ENCODE measurements at regions of chr1 and their contacts with region 1.

Region 1: GRCh38 chr1:43073490-43074230 is 98.4 kb downstream of the EBNA1BP2 start:
- DNase-seq: peak; percentile 56
- ATAC-seq: peak; percentile 87
- H3K4me3 Mint-ChIP-seq: peak overlapping the region; percentile 11
- H3K27ac Mint-ChIP-seq: peak overlapping the region; percentile 6
- H3K4me1 Mint-ChIP-seq: peaks cover 29% of the 10 kb centered on the region
- H3K27me3 Mint-ChIP-seq: no peaks in the 10 kb centered on the region
- CTCF ChIP-seq: peak; percentile 30

Region 2: DNA sequence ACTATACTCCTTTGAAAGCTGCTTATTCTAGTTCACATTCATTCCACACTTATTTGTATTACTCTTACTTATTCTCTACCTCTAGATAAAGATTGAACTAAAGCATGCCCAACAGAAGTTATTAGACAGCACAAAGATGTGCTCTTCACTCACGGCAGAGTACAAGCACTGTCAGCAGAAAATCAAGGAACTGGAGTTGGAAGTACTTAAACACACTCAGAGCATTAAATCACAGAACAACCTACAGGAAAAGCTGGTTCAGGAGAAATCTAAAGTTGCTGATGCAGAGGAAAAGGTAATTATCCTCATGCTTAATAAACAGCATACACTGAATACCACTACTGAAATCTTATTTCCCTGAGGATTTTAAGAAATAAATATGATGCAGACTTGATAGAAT is 496.7 kb before region 1 on chr1:
- CTCF ChIA-PET with region 1: interaction called, 9 read pairs
- POLR2A ChIA-PET with region 1: no interaction called
- intact Hi-C with region 1: loop called (anchors 1 kb)
- DNase-seq: no peak
- ATAC-seq: no peak
- H3K4me3 Mint-ChIP-seq: no peak overlapping the region
- H3K27ac Mint-ChIP-seq: no peak overlapping the region
- H3K4me1 Mint-ChIP-seq: no peaks in the 10 kb centered on the region
- H3K27me3 Mint-ChIP-seq: no peaks in the 10 kb centered on the region
- CTCF ChIP-seq: no peak

Region 3: DNA sequence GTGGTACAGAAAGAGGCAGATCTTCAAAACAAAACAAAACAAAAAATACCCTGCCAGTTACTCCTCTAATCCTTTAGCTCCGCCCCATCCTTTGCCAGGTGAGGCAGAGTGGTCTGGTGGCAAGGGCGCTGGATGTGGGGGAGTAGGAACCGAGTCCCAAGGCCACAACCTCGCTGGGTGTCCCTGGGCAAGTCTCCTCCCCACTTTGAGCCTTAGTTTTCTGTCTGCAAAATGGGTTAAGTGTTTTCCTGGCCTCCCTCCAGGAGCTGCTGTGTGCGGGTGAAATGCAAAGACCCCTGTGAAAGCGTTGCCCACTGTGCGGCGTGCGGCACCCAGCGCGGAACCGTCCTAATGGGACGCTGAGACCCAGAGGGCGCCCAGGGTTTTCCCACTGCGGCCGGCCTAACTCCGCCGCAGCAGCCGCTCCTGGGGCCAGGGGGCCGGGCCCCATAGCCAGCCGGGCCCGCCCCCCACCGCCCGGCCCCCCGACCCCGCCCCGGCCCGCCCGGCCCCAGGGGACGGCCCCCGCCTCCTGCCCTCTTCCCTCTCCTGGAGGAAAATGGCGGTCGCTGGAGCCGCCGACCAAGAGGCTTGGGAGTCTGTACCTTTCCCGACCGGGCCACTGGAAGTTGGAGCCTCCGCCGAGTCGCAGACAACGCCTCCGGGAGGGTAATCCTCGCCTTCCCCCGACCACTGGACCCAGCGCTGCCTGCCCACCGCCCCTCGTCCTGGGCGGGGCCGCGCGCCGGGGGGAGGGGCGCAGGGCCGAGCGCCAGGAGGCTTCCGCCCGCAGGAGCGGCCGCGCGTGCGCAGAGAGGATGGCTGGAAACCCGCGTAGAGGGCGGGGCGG is 256.9 kb before region 1 on chr1 and contains the starts of genes ERMAP and SVBP:
- CTCF ChIA-PET with region 1: interaction called, 13 read pairs
- POLR2A ChIA-PET with region 1: no interaction called
- intact Hi-C with region 1: no loop called
- DNase-seq: peak; percentile 97
- ATAC-seq: peak; percentile 88
- H3K4me3 Mint-ChIP-seq: peak within 1 kb of the TSS; percentile 86
- H3K27ac Mint-ChIP-seq: peak within 1 kb of the TSS; percentile 86
- H3K4me1 Mint-ChIP-seq: peaks cover 20% of the 10 kb centered on the region
- H3K27me3 Mint-ChIP-seq: no peaks in the 10 kb centered on the region
- CTCF ChIP-seq: no peak
- total RNA-seq, gene ERMAP: 7.1 and 10.7 TPM in 2 replicates
- total RNA-seq, gene SVBP: 21.5 and 22.4 TPM in 2 replicates

Region 4: GRCh38 chr1:42924082-42924850 is 149.4 kb before region 1 on chr1:
- CTCF ChIA-PET with region 1: interaction called, 523 read pairs
- POLR2A ChIA-PET with region 1: interaction called, 98 read pairs
- intact Hi-C with region 1: loop called (anchors 1 kb)
- DNase-seq: peak; percentile 95
- ATAC-seq: peak; percentile 87
- H3K4me3 Mint-ChIP-seq: peak overlapping the region; percentile 91
- H3K27ac Mint-ChIP-seq: peak overlapping the region; percentile 92
- H3K4me1 Mint-ChIP-seq: peaks cover 41% of the 10 kb centered on the region
- H3K27me3 Mint-ChIP-seq: no peaks in the 10 kb centered on the region
- CTCF ChIP-seq: no peak

Region 5: DNA sequence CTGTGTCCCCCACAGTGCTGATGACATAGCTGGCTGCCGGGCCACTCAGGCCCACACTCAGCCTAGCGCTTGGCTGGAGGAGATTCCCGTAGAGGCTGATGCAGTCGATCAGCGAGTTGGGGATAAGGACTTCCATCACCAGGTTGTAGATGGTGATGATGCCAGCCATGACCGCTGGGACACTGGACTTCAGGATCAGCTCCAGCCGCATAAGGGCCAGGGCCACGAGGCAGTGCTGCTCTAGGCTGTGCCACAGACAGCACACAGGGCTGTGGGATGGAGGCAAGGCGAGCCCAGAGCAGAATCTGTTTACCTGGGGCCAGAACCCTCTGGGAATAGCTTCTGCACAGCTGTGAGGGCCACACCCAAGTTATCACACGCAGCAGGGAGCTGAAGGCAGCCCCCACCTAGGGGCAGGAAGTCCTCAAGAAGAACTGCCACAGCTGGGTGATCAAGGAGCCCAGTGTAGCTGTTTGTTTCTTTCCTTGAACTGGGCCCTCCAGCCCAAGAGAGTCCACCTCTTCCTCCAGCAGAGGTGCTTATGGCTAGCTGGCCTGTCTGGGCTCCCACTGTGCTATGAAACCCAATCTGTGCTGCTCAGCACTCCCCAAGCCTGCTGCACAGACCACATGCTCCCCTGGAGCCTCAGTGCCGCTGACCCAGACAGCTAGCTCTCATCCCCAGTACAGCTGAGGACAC is 121.2 kb before region 1 on chr1:
- CTCF ChIA-PET with region 1: interaction called, 34 read pairs
- POLR2A ChIA-PET with region 1: interaction called, 20 read pairs
- intact Hi-C with region 1: no loop called
- DNase-seq: peak; percentile 51
- ATAC-seq: peak; percentile 76
- H3K4me3 Mint-ChIP-seq: peak overlapping the region; percentile 70
- H3K27ac Mint-ChIP-seq: peak overlapping the region; percentile 96
- H3K4me1 Mint-ChIP-seq: peaks cover 96% of the 10 kb centered on the region
- H3K27me3 Mint-ChIP-seq: no peaks in the 10 kb centered on the region
- CTCF ChIP-seq: no peak

Region 6: GRCh38 chr1:43414634-43415223 is 341.1 kb after region 1 on chr1:
- CTCF ChIA-PET with region 1: interaction called, 14 read pairs
- POLR2A ChIA-PET with region 1: no interaction called
- intact Hi-C with region 1: loop called (anchors 5 kb)
- DNase-seq: peak; percentile 31
- ATAC-seq: peak; percentile 96
- H3K4me3 Mint-ChIP-seq: no peak overlapping the region
- H3K27ac Mint-ChIP-seq: no peak overlapping the region
- H3K4me1 Mint-ChIP-seq: no peaks in the 10 kb centered on the region
- H3K27me3 Mint-ChIP-seq: no peaks in the 10 kb centered on the region
- CTCF ChIP-seq: peak; percentile 19